PC-3 (cell line): ENCODE measurements at regions of chr7 and their contacts with region 1.

Region 1: GRCh38 chr7:20219446-20220292 is 2.5 kb upstream of the MACC1 start:
- DNase-seq: peak; percentile 90
- ATAC-seq: peak; percentile 55
- H3K4me3 ChIP-seq: no peak overlapping the region
- H3K27ac ChIP-seq: peak overlapping the region; percentile 98
- H3K4me1 ChIP-seq: peaks cover 70% of the 10 kb centered on the region
- H3K27me3 ChIP-seq: no peaks in the 10 kb centered on the region
- CTCF ChIP-seq: no peak

Region 2: GRCh38 chr7:20007510-20007909 is 212.2 kb before region 1 on chr7:
- CTCF ChIA-PET with region 1: no interaction called
- POLR2A ChIA-PET with region 1: interaction called, 10 read pairs
- intact Hi-C with region 1: no loop called
- DNase-seq: no peak
- ATAC-seq: peak; percentile 67
- H3K4me3 ChIP-seq: no peak overlapping the region
- H3K27ac ChIP-seq: no peak overlapping the region
- H3K4me1 ChIP-seq: no peaks in the 10 kb centered on the region; the same call in 1 of the 2 replicates
- H3K27me3 ChIP-seq: no peaks in the 10 kb centered on the region
- CTCF ChIP-seq: no peak

Region 3: GRCh38 chr7:20199015-20199737 is 20.5 kb before region 1 on chr7:
- CTCF ChIA-PET with region 1: no interaction called
- POLR2A ChIA-PET with region 1: interaction called, 3 read pairs
- intact Hi-C with region 1: loop called (anchors 1 kb)
- DNase-seq: peak; percentile 94
- ATAC-seq: peak; percentile 98
- H3K4me3 ChIP-seq: no peak overlapping the region
- H3K27ac ChIP-seq: peak overlapping the region; percentile 49
- H3K4me1 ChIP-seq: peaks cover 37% of the 10 kb centered on the region
- H3K27me3 ChIP-seq: no peaks in the 10 kb centered on the region
- CTCF ChIP-seq: no peak

Region 4: GRCh38 chr7:20241194-20241910 is 21.7 kb after region 1 on chr7:
- CTCF ChIA-PET with region 1: no interaction called
- POLR2A ChIA-PET with region 1: no interaction called
- intact Hi-C with region 1: loop called (anchors 1 kb)
- DNase-seq: peak; percentile 83
- ATAC-seq: peak; percentile 64
- H3K4me3 ChIP-seq: no peak overlapping the region
- H3K27ac ChIP-seq: peak overlapping the region; percentile 76
- H3K4me1 ChIP-seq: peaks cover 37% of the 10 kb centered on the region
- H3K27me3 ChIP-seq: no peaks in the 10 kb centered on the region
- CTCF ChIP-seq: no peak

Region 5: GRCh38 chr7:20310963-20311742 is 91.5 kb after region 1 on chr7:
- CTCF ChIA-PET with region 1: no interaction called
- POLR2A ChIA-PET with region 1: interaction called, 4 read pairs
- intact Hi-C with region 1: loop called (anchors 1 kb)
- DNase-seq: peak; percentile 81
- ATAC-seq: peak; percentile 45; the same call in 1 of the 2 replicates
- H3K4me3 ChIP-seq: no peak overlapping the region
- H3K27ac ChIP-seq: no peak overlapping the region
- H3K4me1 ChIP-seq: no peaks in the 10 kb centered on the region
- H3K27me3 ChIP-seq: no peaks in the 10 kb centered on the region
- CTCF ChIP-seq: peak; percentile 75

Region 6: DNA sequence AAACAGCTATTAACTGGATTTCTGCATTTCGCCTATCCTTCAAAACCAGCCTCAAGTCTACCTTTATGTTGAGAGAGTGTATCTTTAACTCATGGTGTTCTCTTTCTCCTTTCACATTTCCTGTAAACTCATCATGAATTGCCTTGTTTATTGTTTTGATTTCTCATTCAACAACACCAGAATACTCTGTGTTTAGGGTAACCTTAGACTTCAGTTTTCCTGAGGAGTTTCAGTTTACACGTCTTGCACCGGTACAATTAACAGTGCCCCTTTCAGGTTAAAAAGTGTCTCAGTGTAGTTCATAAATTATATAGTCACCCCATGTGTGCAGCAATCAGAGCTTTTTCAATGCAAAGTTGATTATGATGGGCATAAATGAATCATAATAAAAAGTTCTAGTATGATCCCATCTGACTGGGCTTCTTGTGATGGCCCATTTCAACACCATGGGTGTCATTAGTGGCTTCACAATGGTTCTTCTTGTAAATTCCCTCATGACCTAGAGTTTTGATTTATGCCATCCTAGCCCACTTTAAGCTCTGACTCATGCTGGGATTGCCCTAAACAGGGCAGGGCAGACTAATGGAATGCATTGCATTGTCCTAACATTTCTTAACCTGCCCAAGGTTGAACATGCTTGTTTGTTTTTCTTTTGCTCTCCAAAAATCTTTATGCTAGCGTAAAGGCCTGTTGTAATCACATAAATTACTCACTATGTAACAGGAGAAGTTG is 133.1 kb after region 1 on chr7:
- CTCF ChIA-PET with region 1: no interaction called
- POLR2A ChIA-PET with region 1: no interaction called
- intact Hi-C with region 1: loop called (anchors 1 kb)
- DNase-seq: peak; percentile 97
- ATAC-seq: peak; percentile 94
- H3K4me3 ChIP-seq: peak overlapping the region; percentile 45
- H3K27ac ChIP-seq: peak overlapping the region; percentile 95
- H3K4me1 ChIP-seq: peaks cover 46% of the 10 kb centered on the region
- H3K27me3 ChIP-seq: no peaks in the 10 kb centered on the region
- CTCF ChIP-seq: no peak

Region 7: DNA sequence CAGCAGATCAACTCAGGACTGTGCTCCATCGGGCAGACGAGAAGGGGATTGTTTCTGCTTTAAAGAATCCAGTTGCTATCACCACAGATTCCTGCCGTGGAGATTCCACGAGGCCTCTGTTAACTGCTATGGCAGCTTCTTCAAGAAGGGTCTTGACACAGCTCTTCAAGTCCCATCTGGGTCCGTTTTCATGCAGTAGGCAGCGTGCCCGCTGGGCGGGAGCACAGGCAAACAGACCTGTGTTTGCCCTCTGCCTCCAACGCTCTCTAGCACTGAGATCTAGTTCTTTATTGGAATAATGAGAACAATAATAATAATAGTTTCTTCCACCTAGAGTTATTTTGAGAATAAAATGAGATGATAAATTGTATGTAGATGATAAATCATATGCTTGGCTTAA is 694.2 kb after region 1 on chr7:
- CTCF ChIA-PET with region 1: no interaction called
- POLR2A ChIA-PET with region 1: no interaction called
- intact Hi-C with region 1: no loop called
- DNase-seq: no peak
- ATAC-seq: no peak
- H3K4me3 ChIP-seq: no peak overlapping the region
- H3K27ac ChIP-seq: no peak overlapping the region
- H3K4me1 ChIP-seq: no peaks in the 10 kb centered on the region
- H3K27me3 ChIP-seq: peaks cover 38% of the 10 kb centered on the region; the same call in 1 of the 2 replicates
- CTCF ChIP-seq: no peak